Activated CD8-positive, alpha-beta T cell treated with anti-CD3 and anti-CD28 coated beads, Interleukin-2, amount 10 ng/mL, durations not matched to agents 7 days and 5 days (primary cell): ENCODE measurements at regions of chr3 and their contacts with region 1.

Region 1: DNA sequence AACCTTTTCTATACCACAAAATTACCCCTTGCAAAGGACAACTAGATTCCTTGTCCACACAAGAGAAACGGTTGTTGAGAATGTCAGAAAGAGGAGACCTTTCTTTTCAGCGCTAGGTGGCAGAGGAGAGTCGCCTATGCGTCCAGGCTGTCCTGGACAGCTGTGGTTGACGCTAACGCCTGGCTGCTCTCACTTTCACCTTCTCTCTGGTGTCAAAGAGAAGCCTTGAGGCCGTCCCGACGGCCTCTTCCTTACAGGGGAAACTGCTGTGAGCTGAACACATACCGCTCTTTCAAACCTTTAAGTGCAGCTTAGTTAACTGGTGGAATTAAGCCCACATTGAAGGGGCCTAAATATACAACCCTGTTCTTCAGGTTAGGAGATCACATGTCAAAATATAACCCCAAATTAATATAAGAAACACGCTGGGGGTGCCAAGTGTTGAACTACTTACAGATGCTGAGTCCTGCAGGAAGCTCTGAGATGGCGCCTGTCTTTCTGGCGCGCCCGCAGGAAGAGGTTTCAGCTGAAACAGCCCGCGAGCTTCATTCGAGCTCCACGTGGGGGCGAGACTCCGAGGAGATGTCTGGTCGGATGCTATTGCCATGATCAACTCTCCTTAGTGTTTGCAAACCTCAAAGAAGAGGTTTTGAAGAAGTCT is 26.1 kb upstream of the KBTBD8 start:
- DNase-seq: peak; percentile 78
- ATAC-seq: peak; percentile 95
- H3K4me3 Mint-ChIP-seq: peak overlapping the region; percentile 75
- H3K27ac Mint-ChIP-seq: peak overlapping the region; percentile 81
- H3K4me1 Mint-ChIP-seq: peaks cover 16% of the 10 kb centered on the region
- H3K27me3 Mint-ChIP-seq: peaks cover 8% of the 10 kb centered on the region

Region 2: GRCh38 chr3:66712210-66712609 is 259.8 kb before region 1 on chr3:
- CTCF ChIA-PET with region 1: no interaction called
- POLR2A ChIA-PET with region 1: no interaction called
- DNase-seq: no peak
- ATAC-seq: no peak
- H3K4me3 Mint-ChIP-seq: no peak overlapping the region
- H3K27ac Mint-ChIP-seq: no peak overlapping the region
- H3K4me1 Mint-ChIP-seq: no peaks in the 10 kb centered on the region
- H3K27me3 Mint-ChIP-seq: peaks cover 2% of the 10 kb centered on the region

Region 3: GRCh38 chr3:66983101-66983500 is 11.1 kb after region 1 on chr3:
- CTCF ChIA-PET with region 1: interaction called, 55 read pairs
- POLR2A ChIA-PET with region 1: no interaction called
- DNase-seq: no peak
- ATAC-seq: no peak
- H3K4me3 Mint-ChIP-seq: no peak overlapping the region
- H3K27ac Mint-ChIP-seq: no peak overlapping the region
- H3K4me1 Mint-ChIP-seq: no peaks in the 10 kb centered on the region
- H3K27me3 Mint-ChIP-seq: peaks cover 10% of the 10 kb centered on the region

Region 4: DNA sequence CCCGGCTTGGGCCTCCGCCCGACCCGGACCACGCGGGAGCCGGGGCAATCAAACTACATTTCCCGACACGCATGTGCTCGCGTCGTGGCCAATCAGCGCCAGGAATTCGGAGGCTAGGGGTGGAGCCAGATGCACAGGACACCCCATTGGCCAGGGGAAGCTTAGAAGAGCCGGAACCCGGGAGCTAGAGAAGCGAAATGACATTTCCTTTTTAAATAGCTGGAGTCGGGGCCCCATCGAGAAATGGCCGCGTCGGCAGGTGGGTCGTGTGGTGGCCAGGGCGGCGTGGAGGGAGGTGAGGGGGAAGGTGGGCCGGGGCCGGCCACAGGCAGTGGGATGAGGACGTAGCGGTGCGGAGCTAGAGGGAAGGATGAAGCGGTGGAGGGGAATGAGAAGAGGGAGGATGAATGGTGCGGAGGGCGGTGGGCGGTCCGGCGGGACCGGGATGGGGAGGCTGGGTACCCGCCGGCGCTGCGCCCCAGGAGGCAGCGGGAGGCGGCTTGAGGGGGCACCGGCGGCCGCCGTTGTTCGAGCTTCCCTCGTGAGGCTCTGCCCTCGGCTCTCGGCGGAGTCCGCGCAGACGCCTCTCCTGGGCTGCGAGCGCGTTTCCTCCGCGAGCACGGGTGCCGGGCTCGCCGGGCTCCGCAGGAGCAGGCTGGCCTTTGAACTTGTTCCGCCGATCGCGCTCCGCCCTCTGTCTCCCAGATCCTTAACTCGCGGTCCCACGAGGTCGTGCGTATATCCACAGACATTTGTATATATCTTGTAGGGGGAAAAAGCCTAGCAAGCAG is 26.3 kb after region 1 on chr3 and contains the start of gene KBTBD8:
- CTCF ChIA-PET with region 1: interaction called, 40 read pairs
- POLR2A ChIA-PET with region 1: interaction called, 6 read pairs
- DNase-seq: peak; percentile 98
- ATAC-seq: peak; percentile 98
- H3K4me3 Mint-ChIP-seq: peak within 1 kb of the TSS; percentile 79
- H3K27ac Mint-ChIP-seq: peak within 1 kb of the TSS; percentile 93
- H3K4me1 Mint-ChIP-seq: peaks cover 30% of the 10 kb centered on the region
- H3K27me3 Mint-ChIP-seq: peaks cover 22% of the 10 kb centered on the region
- total RNA-seq, gene KBTBD8: 10.8 to 12.9 TPM

Region 5: DNA sequence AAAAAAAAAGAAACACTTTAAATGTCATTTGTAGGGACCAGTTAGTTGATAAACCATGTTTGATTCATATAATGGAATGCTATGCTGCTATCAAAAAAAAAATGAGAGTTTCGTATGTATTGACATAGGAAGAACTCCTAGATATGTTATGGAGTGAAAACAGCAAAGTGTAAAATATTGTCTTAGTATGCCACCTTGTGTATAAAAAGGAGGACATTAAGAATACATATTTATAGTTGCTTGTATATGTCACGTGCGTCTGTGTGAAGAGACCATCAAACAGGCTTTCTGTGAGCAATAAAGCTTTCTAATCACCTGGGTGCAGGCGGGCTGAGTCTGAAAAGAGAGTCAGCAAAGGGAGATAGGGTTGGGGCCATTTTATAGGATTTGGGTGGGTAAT is 65.6 kb after region 1 on chr3:
- CTCF ChIA-PET with region 1: interaction called, 10 read pairs
- POLR2A ChIA-PET with region 1: no interaction called
- DNase-seq: no peak
- ATAC-seq: no peak
- H3K4me3 Mint-ChIP-seq: no peak overlapping the region
- H3K27ac Mint-ChIP-seq: no peak overlapping the region
- H3K4me1 Mint-ChIP-seq: no peaks in the 10 kb centered on the region
- H3K27me3 Mint-ChIP-seq: peaks cover 5% of the 10 kb centered on the region